ENCODE measurements at regions of chr15 and their contacts with region 1.

Region 1: GRCh38 chr15:66356345-66357236 is at the start of gene TIPIN:
- DNase-seq: peak; percentile 93 to 94 (median 93)
- H3K4me3 ChIP-seq: peak within 1 kb of the TSS; percentile 62 to 89 (median 70)
- H3K4me3 Mint-ChIP-seq: peak within 1 kb of the TSS; percentile 98 to 100
- H3K27ac ChIP-seq: peak within 1 kb of the TSS; percentile 64 to 79
- H3K27ac Mint-ChIP-seq: peak within 1 kb of the TSS; percentile 91 to 96 (median 95)
- H3K4me1 ChIP-seq: peaks cover 12 to 17% of the 10 kb centered on the region in 2 donors
- H3K4me1 Mint-ChIP-seq: peaks cover 22% of the 10 kb centered on the region
- H3K27me3 ChIP-seq: no peaks in the 10 kb centered on the region
- H3K27me3 Mint-ChIP-seq: peaks cover 0 to 3% (median 1%) of the 10 kb centered on the region in 3 donors
- CTCF ChIP-seq: no peak
- polyA plus RNA-seq, gene TIPIN: 1.4 to 4.0 (median 3.7) TPM

Region 2: DNA sequence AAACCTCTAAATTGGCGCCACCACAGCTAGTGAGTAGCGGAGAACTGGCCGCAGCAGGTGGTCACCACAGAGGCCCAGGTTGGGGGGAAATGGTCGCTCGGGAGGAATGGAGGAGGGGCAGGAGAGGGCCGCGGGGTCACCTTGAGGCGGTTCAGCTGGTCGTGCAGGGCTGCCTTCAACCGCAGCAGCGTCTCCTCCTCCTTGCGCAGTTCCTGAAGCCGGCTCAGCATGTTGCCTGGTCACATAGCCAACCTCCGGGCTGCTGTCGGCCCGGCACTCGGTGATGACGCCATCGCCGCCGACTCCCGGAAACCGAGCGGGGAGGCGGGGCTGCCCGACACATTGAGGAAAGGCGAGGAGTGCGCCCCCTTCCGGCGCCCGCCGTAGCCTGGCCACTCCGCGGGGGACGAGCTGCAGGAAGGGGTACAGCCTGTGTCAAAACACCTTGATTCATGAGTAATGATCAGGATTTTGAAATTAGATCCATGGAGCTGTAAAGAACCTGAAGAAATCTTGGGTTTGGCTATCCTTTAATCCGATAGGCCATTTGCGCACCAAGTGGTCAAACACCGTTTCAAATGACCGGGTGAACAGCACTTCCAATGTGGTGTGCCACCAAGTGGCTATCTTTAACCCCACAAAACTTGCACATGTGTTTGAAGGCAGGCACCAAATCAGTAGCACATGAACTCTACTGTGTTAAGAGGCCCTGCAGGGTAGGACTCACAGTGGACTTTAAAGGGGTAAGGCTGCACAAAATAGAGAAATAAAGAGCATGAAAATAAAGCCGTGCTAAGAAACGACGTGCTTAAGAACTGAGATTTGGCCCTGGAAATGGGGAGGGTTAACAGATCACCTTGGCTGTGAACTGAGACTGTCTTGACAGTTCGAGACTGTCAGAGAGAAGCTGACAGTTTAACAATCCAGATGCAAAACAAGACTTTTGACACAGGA is 141.2 kb after region 1 on chr15 and contains the start of gene SNAPC5:
- intact Hi-C with region 1: loop called (anchors 2 to 10 kb)
- DNase-seq: peak; percentile 94 to 96 (median 95)
- H3K4me3 ChIP-seq: peak within 1 kb of the TSS; percentile 74 to 95 (median 75)
- H3K4me3 Mint-ChIP-seq: peak within 1 kb of the TSS; percentile 94 to 96
- H3K27ac ChIP-seq: peak within 1 kb of the TSS; percentile 84 to 97
- H3K27ac Mint-ChIP-seq: peak within 1 kb of the TSS; percentile 94 to 99 (median 98)
- H3K4me1 ChIP-seq: peaks cover 46 to 69% of the 10 kb centered on the region in 2 donors
- H3K4me1 Mint-ChIP-seq: peaks cover 52% of the 10 kb centered on the region
- H3K27me3 ChIP-seq: no peaks in the 10 kb centered on the region
- H3K27me3 Mint-ChIP-seq: peaks cover 0 to 2% (median 0%) of the 10 kb centered on the region in 3 donors
- CTCF ChIP-seq: peak; percentile 99
- polyA plus RNA-seq, gene SNAPC5: 15.6 to 32.5 (median 30.2) TPM

Measured in CD14-positive monocyte (primary cell).